ENCODE measurements at regions of chr19 and their contacts with region 1.

Region 1: DNA sequence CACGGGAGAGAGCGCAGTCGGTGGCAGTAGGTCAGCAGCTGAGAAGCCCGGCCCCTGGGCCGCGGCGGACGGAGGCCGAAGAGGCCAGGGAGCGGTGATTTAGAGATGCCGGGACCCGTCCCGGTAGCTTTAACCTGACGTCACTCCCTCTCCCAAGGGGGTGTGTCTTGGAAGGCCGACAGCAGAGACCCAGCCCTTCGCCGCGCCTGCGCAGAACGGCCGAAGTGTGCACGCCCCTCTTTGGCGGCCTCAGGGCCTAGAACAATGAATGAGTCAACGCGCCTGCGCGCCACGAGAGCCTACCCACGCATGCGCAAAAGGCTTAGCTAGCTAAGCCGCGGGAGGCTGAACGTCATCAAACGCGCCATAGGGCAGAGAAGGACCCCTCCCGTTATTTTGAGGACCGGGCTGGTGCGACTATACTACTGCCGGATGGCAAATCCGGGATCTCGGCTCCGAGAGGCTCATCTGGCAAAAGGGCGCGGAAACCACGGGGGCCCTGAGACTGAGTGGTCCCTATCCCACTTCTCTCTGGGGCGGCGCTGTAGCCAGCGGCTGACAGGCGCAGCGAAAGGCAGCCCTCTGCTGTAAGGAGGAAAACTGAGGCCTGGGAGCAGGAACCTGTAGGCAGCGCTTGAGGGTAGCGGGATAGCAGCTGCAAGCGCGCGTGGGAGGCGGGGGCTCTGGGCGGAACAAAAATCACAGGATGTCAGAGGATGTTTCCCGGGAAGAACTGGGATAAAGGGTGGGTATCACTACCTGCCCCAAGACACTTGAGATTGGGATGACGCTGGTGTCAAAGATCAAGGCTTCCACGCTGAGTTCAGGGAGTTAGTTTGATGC is at the starts of genes IRGQ and ZNF576:
- DNase-seq: peak; percentile 96 to 100
- H3K4me3 ChIP-seq: peak within 1 kb of the TSS; percentile 94
- H3K27ac ChIP-seq: peak within 1 kb of the TSS; percentile 83
- H3K4me1 ChIP-seq: peaks cover 15% of the 10 kb centered on the region
- H3K27me3 ChIP-seq: no peaks in the 10 kb centered on the region
- CTCF ChIP-seq: no peak
- total RNA-seq, gene IRGQ: 23.3 and 31.6 TPM in 2 replicates
- total RNA-seq, gene ZNF576: 15.5 and 16.9 TPM in 2 replicates

Region 2: DNA sequence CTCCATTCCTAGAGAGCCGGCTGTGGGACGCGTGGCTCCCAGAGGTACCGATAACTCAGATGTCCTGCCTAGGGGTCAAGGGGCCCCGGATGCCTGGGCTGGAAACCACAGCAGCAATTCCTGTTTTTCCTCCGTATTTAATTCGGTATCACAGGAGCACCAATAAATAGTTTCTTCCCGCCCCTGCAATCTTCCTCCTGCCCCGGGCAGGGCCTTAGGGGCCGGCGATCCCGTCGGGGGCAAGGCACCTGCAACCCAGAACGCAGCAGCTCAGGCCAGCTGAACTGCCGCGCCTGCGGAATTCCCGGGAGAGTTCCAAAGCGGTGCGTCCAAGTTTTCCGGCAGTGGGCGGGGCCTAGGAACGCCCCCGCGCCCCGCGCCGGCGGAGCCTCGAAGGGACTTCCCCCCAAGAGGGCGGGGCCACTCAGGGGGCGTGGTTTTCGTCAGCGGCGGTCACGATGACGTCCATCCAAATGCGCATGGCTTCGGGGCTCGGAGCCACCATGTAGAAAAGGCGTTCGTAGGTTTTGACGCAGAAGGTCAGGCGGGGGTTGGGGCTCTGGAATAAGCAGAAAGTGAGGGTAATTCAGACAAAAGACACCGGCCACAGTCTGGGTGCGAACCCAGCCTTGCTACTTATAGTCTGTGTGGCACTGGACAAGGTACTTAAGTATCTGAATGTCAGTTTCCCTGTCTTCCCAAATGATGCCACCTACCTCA is 121.1 kb before region 1 on chr19:
- CTCF ChIA-PET with region 1: no interaction called
- POLR2A ChIA-PET with region 1: interaction called, 13 read pairs
- intact Hi-C with region 1: no loop called
- DNase-seq: peak; percentile 81 to 98
- H3K4me3 ChIP-seq: peak overlapping the region; percentile 54; the same call in 1 of the 2 replicates
- H3K27ac ChIP-seq: peak overlapping the region; percentile 66
- H3K4me1 ChIP-seq: peaks cover 27% of the 10 kb centered on the region
- H3K27me3 ChIP-seq: no peaks in the 10 kb centered on the region
- CTCF ChIP-seq: no peak

Region 3: GRCh38 chr19:43619262-43620060 is 23.2 kb after region 1 on chr19 and contains the start of gene ZNF428:
- CTCF ChIA-PET with region 1: no interaction called
- POLR2A ChIA-PET with region 1: no interaction called
- intact Hi-C with region 1: loop called (anchors 2 kb)
- DNase-seq: peak; percentile 64 to 84
- H3K4me3 ChIP-seq: peak within 1 kb of the TSS; percentile 65
- H3K27ac ChIP-seq: peak within 1 kb of the TSS; percentile 54
- H3K4me1 ChIP-seq: peaks cover 9% of the 10 kb centered on the region
- H3K27me3 ChIP-seq: no peaks in the 10 kb centered on the region
- CTCF ChIP-seq: no peak
- total RNA-seq, gene ZNF428: 46.6 and 61.1 TPM in 2 replicates

Region 4: DNA sequence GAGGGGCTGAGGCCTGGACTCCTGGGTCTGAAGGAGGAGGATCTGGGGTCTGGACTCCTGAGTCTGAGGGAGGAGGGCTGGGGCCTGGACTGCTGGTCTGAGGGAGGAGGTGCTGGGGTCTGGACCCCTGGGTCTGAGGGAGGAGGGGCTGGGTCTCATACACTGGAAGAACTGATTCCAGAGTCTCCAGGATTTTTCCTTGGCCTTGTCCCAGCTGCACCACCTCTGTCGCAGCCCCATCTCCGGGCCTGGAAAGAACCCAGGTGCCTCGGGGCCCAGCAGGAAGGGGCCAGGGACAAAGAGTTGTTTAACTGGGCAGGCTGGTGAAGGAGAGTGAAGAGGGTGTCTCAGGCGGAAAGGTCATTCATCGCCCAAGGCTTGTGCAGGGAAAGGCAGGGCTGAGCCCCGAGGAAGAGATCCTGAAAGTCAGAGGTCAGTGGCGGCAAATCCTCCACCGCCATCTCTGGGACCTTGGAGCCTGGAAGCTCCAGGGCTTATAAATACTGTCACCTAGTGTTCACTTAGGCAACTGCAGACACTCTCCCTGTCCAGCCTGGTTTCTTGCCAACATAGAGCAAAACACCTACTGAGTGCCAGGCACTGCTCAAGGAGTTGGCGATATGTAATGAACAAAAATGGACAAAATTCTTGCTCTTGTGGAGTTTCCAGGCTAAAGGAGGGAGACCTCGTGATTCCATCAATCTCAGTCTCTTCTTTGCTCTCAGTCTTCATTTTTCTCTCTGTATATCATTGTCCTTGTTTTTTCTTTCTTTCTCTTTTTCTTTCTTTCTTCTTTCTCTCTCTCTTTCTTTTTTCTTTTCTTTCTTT is 189.0 kb after region 1 on chr19:
- CTCF ChIA-PET with region 1: no interaction called
- POLR2A ChIA-PET with region 1: no interaction called
- intact Hi-C with region 1: loop called (anchors 2 kb)
- DNase-seq: peak; percentile 86 to 91
- H3K4me3 ChIP-seq: peak overlapping the region; percentile 16; the same call in 1 of the 2 replicates
- H3K27ac ChIP-seq: peak overlapping the region; percentile 70
- H3K4me1 ChIP-seq: peaks cover 43% of the 10 kb centered on the region
- H3K27me3 ChIP-seq: no peaks in the 10 kb centered on the region
- CTCF ChIP-seq: peak; percentile 97

Region 5: DNA sequence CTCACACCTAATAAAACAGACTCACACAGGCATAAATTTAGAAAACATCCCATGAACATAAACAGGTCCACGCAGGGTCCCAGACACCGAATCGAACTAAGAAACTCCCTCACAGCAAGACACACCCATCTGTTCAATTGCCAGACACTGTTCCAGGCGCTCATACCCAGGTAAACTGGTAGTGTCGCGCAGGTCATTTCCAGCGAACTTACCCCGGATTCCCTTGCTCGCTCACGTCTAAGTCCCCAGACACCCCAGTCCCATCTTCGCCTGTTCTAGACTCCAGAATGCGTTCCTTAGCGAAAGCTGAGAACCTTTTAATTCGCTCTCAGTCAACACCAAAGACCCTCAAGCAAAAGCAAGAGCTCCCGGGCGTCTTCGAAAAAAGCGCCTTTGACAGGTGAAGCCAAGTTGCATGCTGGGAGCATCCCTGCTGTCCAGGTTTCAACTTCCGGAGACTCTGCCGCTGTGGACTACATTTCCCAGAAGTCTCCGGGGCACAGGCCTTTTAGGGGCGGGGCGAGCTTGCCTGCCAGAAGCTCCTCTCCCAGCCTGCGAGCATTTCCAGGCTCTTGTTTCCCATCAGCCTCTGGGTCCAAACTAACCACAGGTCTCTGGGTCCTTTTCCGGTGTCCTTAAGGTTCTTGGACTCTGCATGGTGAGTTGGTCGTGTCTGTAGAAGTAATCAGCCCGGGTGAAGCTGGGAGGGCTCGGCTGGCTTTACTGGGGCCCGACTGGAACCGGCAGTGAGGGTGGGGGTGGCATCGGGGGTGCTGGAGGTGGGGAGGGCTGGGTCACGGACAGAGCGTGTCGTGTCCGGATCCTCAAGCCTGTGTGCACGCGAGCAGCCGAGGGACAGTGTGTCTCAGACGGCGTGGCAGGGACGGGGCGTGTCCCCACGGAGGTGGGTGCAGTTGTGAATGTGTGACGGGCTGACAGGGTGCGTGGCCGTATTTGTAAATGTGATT is 230.9 kb after region 1 on chr19 and contains the start of gene ZNF283:
- CTCF ChIA-PET with region 1: no interaction called
- POLR2A ChIA-PET with region 1: interaction called, 15 read pairs
- intact Hi-C with region 1: no loop called
- DNase-seq: peak; percentile 79 to 88
- H3K4me3 ChIP-seq: peak within 1 kb of the TSS; percentile 74
- H3K27ac ChIP-seq: no peak within 1 kb of the TSS
- H3K4me1 ChIP-seq: peaks cover 7% of the 10 kb centered on the region
- H3K27me3 ChIP-seq: no peaks in the 10 kb centered on the region
- CTCF ChIP-seq: no peak
- total RNA-seq, gene ZNF283: 14.8 and 15.2 TPM in 2 replicates

Measured in PC-9 (cell line).